WTC11 (cell line): ENCODE measurements at regions of chr2 and their contacts with region 1.

Region 1: DNA sequence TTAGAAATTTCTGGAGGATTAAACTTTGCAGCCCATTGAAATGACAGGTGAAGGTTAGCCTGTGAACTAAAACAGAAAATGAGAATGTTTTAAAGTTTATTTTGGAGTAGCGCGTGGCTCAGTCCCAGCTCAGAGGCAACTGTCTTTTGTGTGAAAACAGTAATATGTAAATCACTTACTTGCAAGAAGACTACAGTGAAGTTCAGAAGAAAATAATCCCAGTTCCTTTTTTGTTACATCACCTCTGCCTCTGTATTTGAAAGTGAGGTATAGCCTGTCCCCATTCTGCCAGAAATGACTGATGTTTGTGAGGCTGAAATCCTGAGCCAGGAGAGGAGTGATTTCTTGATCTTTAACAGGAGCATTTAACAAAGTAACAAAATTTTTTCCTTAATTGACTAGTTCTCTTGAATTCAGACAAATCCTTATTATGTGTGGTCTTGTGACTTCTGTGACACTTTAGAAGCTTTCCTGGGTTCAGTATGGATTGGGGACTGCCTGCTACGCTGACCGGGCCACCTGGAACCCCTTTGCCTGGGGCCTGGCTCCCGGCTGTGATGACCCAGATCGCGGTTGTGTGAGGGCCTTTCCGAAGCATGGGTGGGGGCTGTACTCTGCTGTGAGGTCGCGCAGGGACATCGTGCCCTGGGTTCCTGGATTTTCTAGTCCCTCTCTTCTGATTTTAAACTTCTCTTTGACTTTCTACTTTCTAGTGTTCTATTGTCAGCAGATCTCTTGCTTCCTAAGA is 24.3 kb downstream of the TRAPPC12 start:
- DNase-seq: no peak
- ATAC-seq: no peak
- H3K4me3 Mint-ChIP-seq: no peak overlapping the region
- H3K27ac Mint-ChIP-seq: no peak overlapping the region
- H3K4me1 Mint-ChIP-seq: peaks cover 15% of the 10 kb centered on the region
- H3K27me3 Mint-ChIP-seq: no peaks in the 10 kb centered on the region
- CTCF ChIP-seq: no peak

Region 2: GRCh38 chr2:3179208-3179607 is 224.6 kb before region 1 on chr2:
- CTCF ChIA-PET with region 1: no interaction called
- POLR2A ChIA-PET with region 1: no interaction called
- DNase-seq: peak; percentile 68
- ATAC-seq: peak; percentile 87
- H3K4me3 Mint-ChIP-seq: no peak overlapping the region
- H3K27ac Mint-ChIP-seq: no peak overlapping the region
- H3K4me1 Mint-ChIP-seq: no peaks in the 10 kb centered on the region
- H3K27me3 Mint-ChIP-seq: no peaks in the 10 kb centered on the region
- CTCF ChIP-seq: peak; percentile 32; the same call in 1 of the 2 replicates

Region 3: DNA sequence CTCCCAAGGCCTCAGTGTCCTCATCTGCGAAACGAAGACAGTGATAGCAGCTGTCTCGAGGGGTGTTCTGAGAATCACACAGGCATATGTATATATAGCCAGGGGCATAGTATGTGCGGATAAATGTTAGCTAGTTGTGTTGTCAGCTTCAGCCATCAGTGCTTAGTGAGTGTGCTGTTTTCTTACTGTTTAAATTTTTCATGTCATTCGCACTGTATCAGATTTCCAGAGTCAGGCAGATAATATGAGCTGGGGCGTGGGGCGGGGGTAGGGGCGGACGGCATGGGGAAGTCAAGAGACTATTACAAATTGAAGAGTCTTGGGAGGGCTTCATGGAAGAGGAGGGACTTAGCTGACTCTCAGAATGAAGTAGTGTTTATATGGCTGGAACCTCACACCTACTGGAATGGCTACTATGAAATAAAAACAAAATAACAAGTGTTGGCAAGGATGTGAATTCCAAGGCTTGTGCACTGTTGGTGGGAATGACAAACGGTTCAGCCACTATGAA is 17.3 kb before region 1 on chr2:
- CTCF ChIA-PET with region 1: no interaction called
- POLR2A ChIA-PET with region 1: no interaction called
- DNase-seq: no peak
- ATAC-seq: no peak
- H3K4me3 Mint-ChIP-seq: no peak overlapping the region
- H3K27ac Mint-ChIP-seq: no peak overlapping the region; the same call in 1 of the 2 replicates
- H3K4me1 Mint-ChIP-seq: no peaks in the 10 kb centered on the region
- H3K27me3 Mint-ChIP-seq: no peaks in the 10 kb centered on the region
- CTCF ChIP-seq: no peak

Region 4: GRCh38 chr2:3423492-3424175 is 19.9 kb after region 1 on chr2:
- CTCF ChIA-PET with region 1: interaction called, 14 read pairs
- POLR2A ChIA-PET with region 1: interaction called, 3 read pairs
- DNase-seq: peak; percentile 87
- ATAC-seq: peak; percentile 91
- H3K4me3 Mint-ChIP-seq: no peak overlapping the region
- H3K27ac Mint-ChIP-seq: peak overlapping the region; percentile 19
- H3K4me1 Mint-ChIP-seq: no peaks in the 10 kb centered on the region
- H3K27me3 Mint-ChIP-seq: no peaks in the 10 kb centered on the region
- CTCF ChIP-seq: peak; percentile 99

Region 5: GRCh38 chr2:3449086-3449485 is 45.3 kb after region 1 on chr2:
- CTCF ChIA-PET with region 1: no interaction called
- POLR2A ChIA-PET with region 1: no interaction called
- DNase-seq: no peak
- ATAC-seq: no peak
- H3K4me3 Mint-ChIP-seq: no peak overlapping the region
- H3K27ac Mint-ChIP-seq: peak overlapping the region; percentile 74
- H3K4me1 Mint-ChIP-seq: 0 out of 2 replicates have a peak, but pooled peaks cover 2% of the 10 kb centered on the region
- H3K27me3 Mint-ChIP-seq: no peaks in the 10 kb centered on the region
- CTCF ChIP-seq: no peak